Activated naive CD4-positive, alpha-beta T cell treated with anti-CD3 and anti-CD28 coated beads for 36 hours (primary cell): ENCODE measurements at regions of chr5 and their contacts with region 1.

Region 1: DNA sequence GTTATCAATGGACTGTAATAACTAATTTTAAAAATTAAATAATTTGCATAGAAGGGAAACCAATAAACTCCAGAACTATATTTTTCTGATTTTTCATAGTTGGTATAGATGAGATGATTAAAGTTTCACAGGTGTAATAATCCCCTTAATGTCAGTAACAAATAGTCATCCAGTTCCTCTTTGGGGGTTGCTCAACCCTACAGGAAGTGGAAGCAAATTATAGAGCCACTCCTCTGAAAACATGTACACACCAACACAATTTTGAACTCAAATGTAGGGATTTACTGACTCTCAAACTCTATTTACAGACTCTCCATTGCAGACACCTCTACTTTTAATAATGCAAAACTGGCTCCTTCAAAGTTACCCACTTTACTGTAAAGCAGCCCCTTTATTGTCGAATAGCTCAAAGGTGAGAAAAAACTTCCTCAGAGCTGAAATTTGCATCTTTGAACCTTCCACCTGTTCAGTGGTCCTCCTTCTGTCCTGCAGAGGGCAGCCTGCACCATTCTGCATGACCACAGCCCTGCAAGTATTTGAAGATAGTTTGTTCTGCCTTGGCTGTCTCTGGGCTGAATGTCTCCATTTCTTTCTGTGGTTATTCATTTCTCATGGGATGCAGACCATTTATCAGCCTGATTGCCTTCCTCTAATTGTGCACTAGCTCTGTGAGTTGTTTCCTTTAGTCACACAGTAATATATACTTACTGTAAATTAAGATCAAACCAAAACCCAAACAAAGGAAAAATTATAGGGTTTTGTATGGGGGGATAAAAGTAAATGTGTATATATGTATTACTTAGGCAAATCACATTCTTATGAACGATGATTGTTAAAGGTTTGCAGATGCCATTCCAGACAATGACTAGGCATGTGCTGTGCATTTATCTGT is 383.2 kb upstream of the SGCD start:
- DNase-seq: peak; percentile 62
- H3K4me3 Mint-ChIP-seq: no peak overlapping the region
- H3K27ac Mint-ChIP-seq: no peak overlapping the region
- H3K4me1 Mint-ChIP-seq: no peaks in the 10 kb centered on the region
- H3K27me3 Mint-ChIP-seq: peaks cover 10% of the 10 kb centered on the region

Region 2: GRCh38 chr5:155867522-155868088 is 76.2 kb before region 1 on chr5:
- CTCF ChIA-PET with region 1: no interaction called
- intact Hi-C with region 1: no loop called
- DNase-seq: no peak
- H3K4me3 Mint-ChIP-seq: no peak overlapping the region
- H3K27ac Mint-ChIP-seq: no peak overlapping the region
- H3K4me1 Mint-ChIP-seq: no peaks in the 10 kb centered on the region
- H3K27me3 Mint-ChIP-seq: peaks cover 15% of the 10 kb centered on the region

Region 3: DNA sequence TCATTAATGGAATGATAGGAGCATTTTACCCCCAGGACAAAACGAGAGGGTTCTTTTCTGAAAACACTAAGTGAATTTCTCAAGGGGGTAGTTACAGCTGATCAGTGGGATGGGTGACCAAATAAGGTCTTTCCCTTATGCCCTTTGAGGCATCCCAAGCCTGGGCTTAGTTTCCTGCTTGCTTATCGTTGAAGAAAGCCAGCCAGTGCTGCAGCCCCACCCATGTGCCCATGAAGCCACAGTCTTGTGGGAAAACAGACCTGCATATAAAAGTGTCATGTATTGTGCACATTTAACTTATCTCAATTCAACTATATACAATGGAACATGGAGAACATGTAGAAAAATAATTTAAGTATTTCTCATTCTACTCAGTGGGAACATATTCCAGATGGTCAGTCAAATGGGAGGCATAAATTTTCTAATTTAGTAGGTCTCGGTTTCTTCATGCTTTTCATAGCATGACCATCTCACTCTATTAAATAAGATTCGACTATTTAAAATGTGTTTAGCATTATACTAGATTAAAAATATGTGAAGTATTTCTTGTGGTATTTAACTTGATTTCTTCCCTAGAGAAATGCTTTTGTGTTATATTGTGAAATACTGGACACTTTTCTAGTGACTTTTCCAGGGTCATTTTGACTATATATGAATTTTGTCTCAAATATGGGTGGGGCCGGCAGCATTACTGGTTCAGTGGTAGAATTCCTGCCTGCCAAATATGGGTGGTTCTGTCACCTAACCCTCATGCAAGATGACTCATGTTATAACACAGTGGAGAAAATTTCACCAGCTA is 193.5 kb after region 1 on chr5:
- CTCF ChIA-PET with region 1: no interaction called
- intact Hi-C with region 1: no loop called
- DNase-seq: no peak
- H3K4me3 Mint-ChIP-seq: no peak overlapping the region
- H3K27ac Mint-ChIP-seq: no peak overlapping the region
- H3K4me1 Mint-ChIP-seq: no peaks in the 10 kb centered on the region
- H3K27me3 Mint-ChIP-seq: peaks cover 7% of the 10 kb centered on the region

Region 4: DNA sequence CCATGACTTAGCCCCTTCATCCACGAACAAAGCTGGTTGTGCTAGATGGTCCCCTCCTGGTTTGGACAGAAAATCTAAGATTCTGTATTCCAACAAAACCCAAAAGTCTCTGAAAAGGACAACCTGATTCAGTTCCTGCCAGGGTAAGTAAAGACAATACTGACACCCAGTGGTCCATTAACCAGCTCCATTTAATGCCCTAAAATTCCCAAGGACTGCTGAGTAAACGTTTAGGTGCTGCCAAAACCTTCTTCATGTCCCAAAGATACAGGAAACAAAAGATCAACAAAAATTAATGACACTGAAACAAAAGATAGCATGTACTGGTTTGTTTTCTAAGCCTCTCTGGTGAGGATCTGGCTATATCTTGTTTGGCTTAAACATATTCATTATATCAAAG is 881.0 kb after region 1 on chr5:
- CTCF ChIA-PET with region 1: interaction called, 3 read pairs
- intact Hi-C with region 1: loop called (anchors 5 kb)
- DNase-seq: no peak
- H3K4me3 Mint-ChIP-seq: no peak overlapping the region
- H3K27ac Mint-ChIP-seq: no peak overlapping the region
- H3K4me1 Mint-ChIP-seq: no peaks in the 10 kb centered on the region
- H3K27me3 Mint-ChIP-seq: no peaks in the 10 kb centered on the region